ENCODE measurements at regions of chr20 and their contacts with region 1.

Region 1: DNA sequence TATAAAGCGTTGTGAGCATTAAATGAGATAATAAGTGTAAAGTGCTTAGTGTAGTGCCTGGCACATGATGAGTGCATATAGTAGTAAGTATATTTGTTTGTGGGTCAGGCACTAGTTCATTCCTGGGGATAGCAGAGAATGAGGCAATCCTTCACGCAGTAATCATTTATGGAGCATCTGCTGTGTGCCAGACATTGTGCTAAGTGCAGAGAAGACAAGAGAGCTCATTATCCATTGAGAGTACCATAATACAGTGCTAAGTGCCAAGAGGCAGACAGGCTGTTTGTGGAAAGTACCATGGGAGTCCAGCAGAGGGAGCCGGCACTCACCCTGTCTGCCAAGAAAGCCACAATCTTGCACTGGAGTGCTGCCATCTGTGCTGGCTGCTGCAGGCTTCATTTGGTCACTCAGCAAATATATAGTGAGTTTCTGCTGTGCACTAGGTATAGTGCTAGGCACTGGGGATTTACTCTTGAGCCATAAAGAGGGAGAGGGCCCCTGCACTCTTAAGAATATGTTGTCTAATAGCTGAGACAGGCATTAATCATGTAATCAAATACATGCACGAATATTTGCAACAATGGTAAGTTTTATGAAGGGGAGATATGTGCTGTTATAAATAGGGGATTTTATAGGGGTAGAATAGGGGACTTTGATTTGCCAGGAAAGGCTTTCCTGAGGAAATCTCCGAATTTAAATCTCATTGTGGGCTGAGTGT is 12.9 kb upstream of the MROH8 start:
- DNase-seq: peak; percentile 81
- H3K4me3 Mint-ChIP-seq: no peak overlapping the region
- H3K27ac Mint-ChIP-seq: peak overlapping the region; percentile 51
- H3K4me1 Mint-ChIP-seq: peaks cover 75% of the 10 kb centered on the region
- H3K27me3 Mint-ChIP-seq: no peaks in the 10 kb centered on the region

Region 2: DNA sequence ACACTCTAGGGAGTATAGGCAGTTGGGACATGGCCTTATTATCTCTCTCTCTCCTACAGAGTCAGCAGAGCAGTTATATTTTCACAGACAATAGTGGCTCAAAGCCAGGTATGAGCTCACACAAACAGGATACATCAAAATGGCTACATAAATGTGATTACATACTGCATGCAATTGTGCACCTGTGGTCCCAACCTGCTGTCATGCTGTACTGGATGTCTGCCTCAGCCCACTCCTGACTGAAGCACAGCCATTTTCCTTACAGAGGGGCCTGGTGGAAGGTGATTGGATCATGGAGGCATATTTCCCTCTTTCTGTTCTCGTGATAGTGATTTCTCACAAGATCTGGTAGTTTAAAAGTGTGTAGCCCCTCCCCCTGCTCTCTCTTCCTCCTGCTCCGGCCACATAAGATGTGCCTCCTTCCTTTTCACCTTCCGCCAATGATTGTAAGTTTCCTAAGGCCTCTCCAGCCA is 203.8 kb before region 1 on chr20:
- CTCF ChIA-PET with region 1: no interaction called
- intact Hi-C with region 1: no loop called
- DNase-seq: peak; percentile 58
- H3K4me3 Mint-ChIP-seq: peak overlapping the region; percentile 5
- H3K27ac Mint-ChIP-seq: peak overlapping the region; percentile 69
- H3K4me1 Mint-ChIP-seq: peaks cover 35% of the 10 kb centered on the region
- H3K27me3 Mint-ChIP-seq: no peaks in the 10 kb centered on the region

Region 3: GRCh38 chr20:37007898-37008649 is 184.2 kb before region 1 on chr20:
- CTCF ChIA-PET with region 1: no interaction called
- intact Hi-C with region 1: loop called (anchors 5 kb)
- DNase-seq: no peak
- H3K4me3 Mint-ChIP-seq: no peak overlapping the region
- H3K27ac Mint-ChIP-seq: no peak overlapping the region
- H3K4me1 Mint-ChIP-seq: peaks cover 17% of the 10 kb centered on the region
- H3K27me3 Mint-ChIP-seq: no peaks in the 10 kb centered on the region

Region 4: GRCh38 chr20:37178839-37179670 is 13.2 kb before region 1 on chr20 and contains the starts of genes MROH8 and RPN2:
- CTCF ChIA-PET with region 1: interaction called, 45 read pairs
- intact Hi-C with region 1: loop called (anchors 1 kb)
- DNase-seq: peak; percentile 98
- H3K4me3 Mint-ChIP-seq: peak within 1 kb of the TSS; percentile 94
- H3K27ac Mint-ChIP-seq: peak within 1 kb of the TSS; percentile 97
- H3K4me1 Mint-ChIP-seq: peaks cover 37% of the 10 kb centered on the region
- H3K27me3 Mint-ChIP-seq: no peaks in the 10 kb centered on the region
- total RNA-seq, gene MROH8: 0.54 to 0.91 TPM
- total RNA-seq, gene RPN2: 102 to 104 TPM

Region 5: GRCh38 chr20:37209661-37210314 is 17.5 kb after region 1 on chr20:
- CTCF ChIA-PET with region 1: interaction called, 10 read pairs
- intact Hi-C with region 1: no loop called
- DNase-seq: no peak
- H3K4me3 Mint-ChIP-seq: no peak overlapping the region
- H3K27ac Mint-ChIP-seq: no peak overlapping the region
- H3K4me1 Mint-ChIP-seq: peaks cover 3% of the 10 kb centered on the region
- H3K27me3 Mint-ChIP-seq: no peaks in the 10 kb centered on the region

Region 6: DNA sequence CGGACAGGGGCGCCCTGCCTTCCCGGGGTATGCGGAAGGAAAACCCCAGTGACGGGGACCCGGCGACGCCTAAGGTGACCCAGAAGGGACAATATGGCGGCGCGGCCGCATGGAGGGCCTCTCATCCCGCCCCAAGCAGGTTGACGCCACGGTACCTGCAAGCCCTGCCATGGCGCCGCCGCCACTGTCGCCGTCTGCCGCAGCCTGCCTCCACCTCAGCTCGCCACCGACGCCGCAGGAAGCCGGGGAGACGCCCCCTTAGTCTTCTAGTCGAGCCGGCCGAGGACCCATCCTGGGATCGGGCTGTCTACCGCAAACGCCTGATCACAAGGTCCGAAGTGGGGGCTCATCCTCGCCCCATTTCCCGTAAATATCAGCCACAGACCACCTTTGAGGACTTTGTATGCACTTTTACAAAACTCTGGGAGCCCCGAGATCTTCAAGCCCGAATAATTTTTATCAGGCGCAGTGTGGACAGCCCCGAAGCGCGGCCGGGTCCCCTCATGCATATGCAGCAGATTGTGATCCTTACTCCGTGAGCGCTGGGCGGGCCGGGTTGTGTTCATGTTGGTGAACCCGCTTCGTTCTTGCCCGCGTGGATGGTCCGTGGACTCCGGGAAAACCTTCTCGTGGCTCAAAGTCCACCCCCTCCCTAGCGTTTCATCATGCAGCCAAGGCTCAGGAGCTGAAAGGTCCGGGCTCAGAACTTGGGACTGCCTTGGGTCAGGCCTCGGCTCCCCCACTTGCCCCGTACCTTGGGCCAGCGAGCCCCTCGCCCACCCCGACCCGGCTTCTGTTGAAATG is 335.5 kb after region 1 on chr20 and contains the start of gene BLCAP:
- CTCF ChIA-PET with region 1: interaction called, 5 read pairs
- intact Hi-C with region 1: loop called (anchors 2 kb)
- DNase-seq: peak; percentile 94
- H3K4me3 Mint-ChIP-seq: peak within 1 kb of the TSS; percentile 87
- H3K27ac Mint-ChIP-seq: peak within 1 kb of the TSS; percentile 99
- H3K4me1 Mint-ChIP-seq: peaks cover 42% of the 10 kb centered on the region
- H3K27me3 Mint-ChIP-seq: no peaks in the 10 kb centered on the region
- total RNA-seq, gene BLCAP: 14.2 to 16.2 TPM

Measured in activated naive CD4-positive, alpha-beta T cell treated with anti-CD3 and anti-CD28 coated beads for 36 hours (primary cell).